Posterior vena cava (tissue), 2 donors: ENCODE measurements at regions of chr10 and their contacts with region 1.

Region 1: DNA sequence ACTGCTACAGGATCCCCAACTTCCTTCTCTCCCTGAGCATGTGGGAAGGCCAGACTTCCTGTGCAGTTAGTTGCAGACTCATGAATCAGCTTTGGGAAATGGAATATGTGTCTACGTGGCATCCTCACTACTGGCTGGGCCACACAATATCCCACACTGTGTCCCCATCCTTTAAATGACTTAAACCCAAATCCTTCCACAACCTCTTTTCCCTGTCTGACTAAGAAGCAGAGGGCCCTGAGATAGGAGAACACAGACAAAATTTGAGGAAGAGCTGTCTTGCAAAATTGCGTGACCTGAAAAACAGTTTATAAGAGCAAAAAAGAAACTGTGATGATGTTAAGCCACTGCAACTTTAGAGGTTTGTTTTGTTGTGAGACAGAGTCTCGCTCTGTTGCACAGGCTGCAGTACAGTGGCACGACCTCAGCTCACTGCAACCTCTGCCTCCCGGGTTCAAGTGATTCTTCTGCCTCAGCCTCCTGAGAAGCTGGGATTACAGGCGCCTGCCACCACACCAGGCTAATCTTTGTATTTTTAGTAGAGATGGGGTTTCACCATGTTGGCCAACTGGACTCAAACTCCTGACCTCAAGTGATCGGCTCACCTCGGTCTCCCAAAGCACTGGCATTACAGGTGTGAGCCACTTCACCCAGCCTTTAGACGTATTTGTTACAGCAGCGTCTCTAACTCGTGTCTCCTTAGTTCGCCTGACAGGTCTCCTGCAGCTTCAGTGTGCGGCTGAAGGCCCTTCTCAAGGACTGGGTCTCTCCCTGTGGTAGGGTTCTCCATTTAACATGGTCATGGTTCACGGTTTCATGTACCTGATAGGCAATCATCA is 46.9 kb upstream of the SFMBT2 start:
- DNase-seq: no peak

Region 2: DNA sequence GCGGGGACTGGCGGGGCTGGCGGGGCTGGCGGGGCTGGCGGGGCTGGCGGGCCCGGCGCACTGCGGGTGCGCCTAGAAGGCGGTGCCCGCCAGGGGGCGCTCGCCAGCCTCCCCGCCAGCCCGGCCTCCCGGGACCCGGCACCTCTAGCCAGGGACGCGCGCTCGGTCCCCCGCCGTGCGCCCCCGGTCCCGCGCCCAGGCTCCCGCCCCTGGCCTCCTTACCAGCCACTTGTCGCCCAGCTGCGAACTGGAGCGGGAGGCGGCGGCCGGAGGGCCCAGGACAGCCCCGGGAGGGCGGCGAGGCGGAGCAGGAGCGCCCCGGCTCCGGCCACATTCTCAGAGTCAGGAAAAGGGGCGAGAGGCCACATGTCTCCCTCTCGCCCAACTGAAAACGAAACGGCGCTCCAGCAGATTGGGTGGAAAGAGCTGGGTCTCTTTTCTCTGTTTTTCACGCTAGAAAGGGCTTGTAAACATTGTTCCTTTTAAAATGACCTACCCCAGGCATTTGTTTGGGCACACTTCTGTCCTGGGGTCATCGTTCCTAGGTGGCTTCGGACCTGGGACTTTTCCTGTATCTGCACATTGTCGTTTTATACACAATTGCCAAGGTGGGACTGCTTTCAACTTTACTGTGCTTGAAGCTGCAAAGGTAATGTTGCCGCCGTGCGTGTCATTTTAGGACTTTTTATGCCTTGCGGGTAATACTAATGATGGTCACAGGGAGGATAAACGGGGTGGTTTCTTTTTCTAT is 877.2 kb before region 1 on chr10:
- intact Hi-C with region 1: loop called in 1 of 2 experiments (anchors 5 kb)
- DNase-seq: peak; percentile 91

Region 3: DNA sequence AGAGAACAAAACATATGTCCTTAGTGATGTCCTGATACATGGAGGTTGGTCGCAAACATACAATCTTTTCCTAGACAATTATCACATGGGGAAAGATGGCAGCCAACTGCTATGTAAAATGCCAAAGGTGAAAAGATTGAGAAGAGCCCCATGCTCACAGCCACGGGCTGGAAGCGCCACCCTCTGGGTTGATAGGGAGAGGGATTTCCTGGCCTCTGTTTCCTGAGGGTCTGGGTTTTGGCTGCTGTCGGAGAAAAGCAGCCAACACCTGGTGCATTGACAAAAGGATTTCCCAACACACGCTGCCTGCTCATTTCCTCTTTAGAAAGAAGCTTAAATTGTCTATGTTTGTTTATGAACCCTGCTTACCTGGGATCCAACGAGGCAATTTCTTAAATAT is 165.3 kb after region 1 on chr10:
- intact Hi-C with region 1: no loop called
- DNase-seq: no peak

Region 4: GRCh38 chr10:7980196-7980595 is 522.5 kb after region 1 on chr10:
- intact Hi-C with region 1: no loop called
- DNase-seq: no peak